PC-9 (cell line): ENCODE measurements at regions of chr14 and their contacts with region 1.

Region 1: GRCh38 chr14:68248481-68249255 is 429.1 kb downstream of the RAD51B start:
- DNase-seq: peak; percentile 33 to 48
- H3K4me3 ChIP-seq: no peak overlapping the region
- H3K27ac ChIP-seq: peak overlapping the region; percentile 93
- H3K4me1 ChIP-seq: peaks cover 66% of the 10 kb centered on the region
- H3K27me3 ChIP-seq: no peaks in the 10 kb centered on the region
- CTCF ChIP-seq: peak; percentile 90

Region 2: DNA sequence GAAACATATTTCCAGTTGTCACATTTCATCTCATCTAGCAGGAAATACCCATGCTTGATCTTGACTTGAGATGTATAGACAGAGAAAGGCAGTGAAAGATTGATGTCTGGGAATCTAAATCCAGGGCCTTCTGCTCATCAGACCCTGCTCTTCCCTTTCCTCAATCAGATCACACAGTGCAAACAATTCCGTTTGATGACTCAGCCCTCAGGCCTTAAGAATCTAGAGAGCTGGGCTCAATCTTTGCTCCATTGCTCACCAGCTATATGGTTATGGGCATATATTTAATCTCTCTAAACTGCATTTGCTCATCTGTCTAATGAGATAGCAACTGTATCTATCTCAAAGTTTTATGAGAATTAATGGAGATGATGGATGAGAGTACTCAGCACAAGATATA is 1964.3 kb before region 1 on chr14:
- CTCF ChIA-PET with region 1: interaction called, 13 read pairs
- POLR2A ChIA-PET with region 1: no interaction called
- intact Hi-C with region 1: no loop called
- DNase-seq: no peak
- H3K4me3 ChIP-seq: no peak overlapping the region
- H3K27ac ChIP-seq: no peak overlapping the region
- H3K4me1 ChIP-seq: no peaks in the 10 kb centered on the region
- H3K27me3 ChIP-seq: no peaks in the 10 kb centered on the region
- CTCF ChIP-seq: no peak

Region 3: GRCh38 chr14:67963960-67964744 is 284.5 kb before region 1 on chr14:
- CTCF ChIA-PET with region 1: no interaction called
- POLR2A ChIA-PET with region 1: no interaction called
- intact Hi-C with region 1: loop called (anchors 5 kb)
- DNase-seq: peak; percentile 44 to 95
- H3K4me3 ChIP-seq: peak overlapping the region; percentile 34; the same call in 1 of the 2 replicates
- H3K27ac ChIP-seq: peak overlapping the region; percentile 77
- H3K4me1 ChIP-seq: peaks cover 38% of the 10 kb centered on the region
- H3K27me3 ChIP-seq: no peaks in the 10 kb centered on the region
- CTCF ChIP-seq: no peak

Region 4: GRCh38 chr14:68210729-68211299 is 37.9 kb before region 1 on chr14:
- CTCF ChIA-PET with region 1: no interaction called
- POLR2A ChIA-PET with region 1: no interaction called
- intact Hi-C with region 1: no loop called
- DNase-seq: peak; percentile 31 to 87
- H3K4me3 ChIP-seq: no peak overlapping the region
- H3K27ac ChIP-seq: peak overlapping the region; percentile 51
- H3K4me1 ChIP-seq: peaks cover 17% of the 10 kb centered on the region
- H3K27me3 ChIP-seq: no peaks in the 10 kb centered on the region
- CTCF ChIP-seq: no peak

Region 5: GRCh38 chr14:68222726-68223125 is 25.9 kb before region 1 on chr14:
- CTCF ChIA-PET with region 1: no interaction called
- POLR2A ChIA-PET with region 1: no interaction called
- intact Hi-C with region 1: no loop called
- DNase-seq: no peak
- H3K4me3 ChIP-seq: no peak overlapping the region
- H3K27ac ChIP-seq: no peak overlapping the region
- H3K4me1 ChIP-seq: no peaks in the 10 kb centered on the region
- H3K27me3 ChIP-seq: no peaks in the 10 kb centered on the region
- CTCF ChIP-seq: no peak

Region 6: DNA sequence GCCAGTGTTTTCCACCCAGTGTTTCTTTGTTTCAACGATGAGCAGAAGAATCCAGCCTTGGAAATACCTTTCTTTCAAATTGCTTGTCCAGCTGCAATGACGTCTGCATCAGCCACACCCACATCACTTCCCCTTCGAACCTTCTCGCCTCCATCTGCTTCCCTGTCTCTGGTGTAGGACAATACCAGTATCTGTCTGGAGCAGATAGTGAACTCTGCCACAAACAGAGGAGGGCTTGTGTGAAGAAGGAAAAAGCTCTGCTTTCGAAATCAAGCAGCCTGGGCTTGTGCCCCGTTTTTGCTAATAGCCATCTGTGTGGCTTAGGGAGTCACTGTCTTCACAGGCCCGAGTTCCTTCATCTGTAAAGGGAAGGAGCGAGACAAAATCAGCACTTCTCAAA is 128.8 kb after region 1 on chr14:
- CTCF ChIA-PET with region 1: no interaction called
- POLR2A ChIA-PET with region 1: no interaction called
- intact Hi-C with region 1: loop called (anchors 5 kb)
- DNase-seq: no peak
- H3K4me3 ChIP-seq: no peak overlapping the region
- H3K27ac ChIP-seq: no peak overlapping the region
- H3K4me1 ChIP-seq: peaks cover 41% of the 10 kb centered on the region
- H3K27me3 ChIP-seq: no peaks in the 10 kb centered on the region
- CTCF ChIP-seq: no peak

Region 7: GRCh38 chr14:68401855-68402254 is 153.2 kb after region 1 on chr14:
- CTCF ChIA-PET with region 1: no interaction called
- POLR2A ChIA-PET with region 1: no interaction called
- intact Hi-C with region 1: no loop called
- DNase-seq: no peak
- H3K4me3 ChIP-seq: no peak overlapping the region
- H3K27ac ChIP-seq: peak overlapping the region; percentile 77
- H3K4me1 ChIP-seq: peaks cover 43% of the 10 kb centered on the region
- H3K27me3 ChIP-seq: no peaks in the 10 kb centered on the region
- CTCF ChIP-seq: no peak

Region 8: GRCh38 chr14:68513838-68514620 is 265.4 kb after region 1 on chr14:
- CTCF ChIA-PET with region 1: no interaction called
- POLR2A ChIA-PET with region 1: interaction called, 6 read pairs
- intact Hi-C with region 1: loop called (anchors 1 kb)
- DNase-seq: no peak
- H3K4me3 ChIP-seq: no peak overlapping the region
- H3K27ac ChIP-seq: peak overlapping the region; percentile 83
- H3K4me1 ChIP-seq: peaks cover 61% of the 10 kb centered on the region
- H3K27me3 ChIP-seq: no peaks in the 10 kb centered on the region
- CTCF ChIP-seq: no peak

Region 9: DNA sequence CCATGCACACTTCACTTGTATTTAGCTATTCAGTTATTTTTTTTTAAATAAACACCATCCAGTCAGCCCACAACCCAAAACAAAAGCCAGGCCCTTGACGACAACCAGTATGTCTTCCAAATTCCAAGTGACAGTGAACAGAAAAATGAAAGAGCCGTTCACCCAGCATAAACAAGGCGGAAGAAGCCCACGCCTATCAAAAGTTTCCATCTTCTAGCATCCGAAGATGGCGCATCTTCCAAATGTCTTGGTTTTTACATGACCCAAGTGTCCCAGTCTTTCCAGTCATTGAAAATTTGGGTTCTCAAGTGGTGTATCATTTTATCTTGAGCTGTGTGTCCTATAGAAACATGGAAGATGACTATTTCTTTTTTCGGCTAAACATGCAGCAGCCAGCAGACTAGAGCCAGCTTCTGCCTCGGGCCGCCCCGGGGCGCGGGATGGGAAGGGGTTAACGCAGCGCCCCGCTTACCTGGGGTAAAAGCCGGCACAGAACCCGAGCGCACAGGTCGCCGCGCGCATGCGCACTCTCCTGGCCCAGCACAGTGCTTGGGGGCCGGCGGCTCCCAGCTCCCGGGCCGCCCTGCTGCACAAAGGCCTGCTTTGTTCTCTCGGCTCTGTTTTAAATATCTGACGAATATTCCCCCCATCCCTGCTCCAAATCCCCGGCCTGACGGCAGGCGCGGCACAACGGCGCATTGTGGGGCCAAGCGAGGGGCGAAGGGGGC is 379.4 kb after region 1 on chr14:
- CTCF ChIA-PET with region 1: interaction called, 3 read pairs
- POLR2A ChIA-PET with region 1: no interaction called
- intact Hi-C with region 1: loop called (anchors 2 kb)
- DNase-seq: peak; percentile 72 to 81
- H3K4me3 ChIP-seq: peak overlapping the region; percentile 60
- H3K27ac ChIP-seq: peak overlapping the region; percentile 92
- H3K4me1 ChIP-seq: peaks cover 45% of the 10 kb centered on the region
- H3K27me3 ChIP-seq: no peaks in the 10 kb centered on the region
- CTCF ChIP-seq: no peak

Region 10: GRCh38 chr14:68816262-68816942 is 567.7 kb after region 1 on chr14:
- CTCF ChIA-PET with region 1: interaction called, 7 read pairs
- POLR2A ChIA-PET with region 1: no interaction called
- intact Hi-C with region 1: loop called (anchors 1 kb)
- DNase-seq: peak; percentile 69 to 92
- H3K4me3 ChIP-seq: peak overlapping the region; percentile 57
- H3K27ac ChIP-seq: peak overlapping the region; percentile 81
- H3K4me1 ChIP-seq: peaks cover 50% of the 10 kb centered on the region
- H3K27me3 ChIP-seq: no peaks in the 10 kb centered on the region
- CTCF ChIP-seq: peak; percentile 98